CD14-positive monocyte (primary cell): ENCODE measurements at regions of chr6 and their contacts with region 1.

Region 1: DNA sequence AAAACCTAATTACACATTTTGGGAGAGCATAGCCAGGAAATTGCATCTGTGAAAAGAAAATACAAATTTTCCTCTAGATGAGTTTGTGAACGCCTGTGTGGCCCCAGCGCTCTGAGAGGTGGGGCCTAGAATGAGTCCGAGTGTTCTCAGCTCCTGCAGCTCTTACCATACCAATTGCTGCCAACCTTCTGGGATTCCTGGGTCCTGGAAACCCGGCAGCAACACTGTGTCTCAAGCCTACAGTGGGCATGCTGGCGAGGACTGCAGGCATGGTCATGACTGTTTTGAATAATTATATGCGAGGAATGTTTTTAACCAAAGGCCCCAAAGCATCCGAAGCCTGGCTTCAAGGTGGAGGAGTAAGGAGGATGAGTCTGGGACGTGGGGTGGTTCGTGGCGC is 90.4 kb downstream of the SERAC1 start:
- DNase-seq: no peak
- H3K4me3 ChIP-seq: no peak overlapping the region
- H3K4me3 Mint-ChIP-seq: no peak overlapping the region
- H3K27ac ChIP-seq: no peak overlapping the region
- H3K27ac Mint-ChIP-seq: no peak overlapping the region
- H3K4me1 ChIP-seq: peaks cover 29 to 32% of the 10 kb centered on the region in 2 donors
- H3K4me1 Mint-ChIP-seq: peaks cover 26% of the 10 kb centered on the region
- H3K27me3 ChIP-seq: no peaks in the 10 kb centered on the region
- H3K27me3 Mint-ChIP-seq: peaks cover 0 to 3% (median 0%) of the 10 kb centered on the region in 3 donors
- CTCF ChIP-seq: no peak

Region 2: DNA sequence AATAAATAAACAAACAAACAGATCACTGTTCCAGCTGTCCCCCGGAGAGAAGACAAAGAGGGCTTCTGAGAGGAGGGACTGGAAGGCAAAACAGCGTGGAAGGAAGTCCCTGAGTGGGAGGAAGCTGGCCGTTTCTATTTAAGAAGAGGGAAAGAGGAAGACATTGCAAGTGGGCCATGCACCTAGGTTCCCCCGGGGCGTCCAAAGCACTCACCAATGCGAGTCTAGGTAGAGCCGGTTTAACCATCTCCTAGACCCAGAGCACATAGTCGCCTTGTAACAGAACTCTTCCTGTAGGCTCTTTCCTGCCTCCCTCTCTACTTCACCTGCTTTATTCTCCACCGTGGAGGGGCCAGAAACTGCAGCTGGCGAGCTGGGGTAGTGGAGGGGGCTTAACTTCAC is 538.3 kb before region 1 on chr6:
- intact Hi-C with region 1: no loop called
- DNase-seq: peak in 2 of 3 donors; percentile 48 to 54
- H3K4me3 ChIP-seq: peak overlapping the region in 1 of 3 experiments; percentile 32
- H3K4me3 Mint-ChIP-seq: peak overlapping the region; percentile 47 to 48
- H3K27ac ChIP-seq: peak overlapping the region in 1 of 2 donors; percentile 55
- H3K27ac Mint-ChIP-seq: peak overlapping the region in 6 of 7 donors; percentile 26 to 87 (median 81)
- H3K4me1 ChIP-seq: peaks cover 52 to 55% of the 10 kb centered on the region in 2 donors
- H3K4me1 Mint-ChIP-seq: peaks cover 53% of the 10 kb centered on the region
- H3K27me3 ChIP-seq: no peaks in the 10 kb centered on the region
- H3K27me3 Mint-ChIP-seq: peaks cover 0 to 2% (median 2%) of the 10 kb centered on the region in 3 donors
- CTCF ChIP-seq: no peak

Region 3: DNA sequence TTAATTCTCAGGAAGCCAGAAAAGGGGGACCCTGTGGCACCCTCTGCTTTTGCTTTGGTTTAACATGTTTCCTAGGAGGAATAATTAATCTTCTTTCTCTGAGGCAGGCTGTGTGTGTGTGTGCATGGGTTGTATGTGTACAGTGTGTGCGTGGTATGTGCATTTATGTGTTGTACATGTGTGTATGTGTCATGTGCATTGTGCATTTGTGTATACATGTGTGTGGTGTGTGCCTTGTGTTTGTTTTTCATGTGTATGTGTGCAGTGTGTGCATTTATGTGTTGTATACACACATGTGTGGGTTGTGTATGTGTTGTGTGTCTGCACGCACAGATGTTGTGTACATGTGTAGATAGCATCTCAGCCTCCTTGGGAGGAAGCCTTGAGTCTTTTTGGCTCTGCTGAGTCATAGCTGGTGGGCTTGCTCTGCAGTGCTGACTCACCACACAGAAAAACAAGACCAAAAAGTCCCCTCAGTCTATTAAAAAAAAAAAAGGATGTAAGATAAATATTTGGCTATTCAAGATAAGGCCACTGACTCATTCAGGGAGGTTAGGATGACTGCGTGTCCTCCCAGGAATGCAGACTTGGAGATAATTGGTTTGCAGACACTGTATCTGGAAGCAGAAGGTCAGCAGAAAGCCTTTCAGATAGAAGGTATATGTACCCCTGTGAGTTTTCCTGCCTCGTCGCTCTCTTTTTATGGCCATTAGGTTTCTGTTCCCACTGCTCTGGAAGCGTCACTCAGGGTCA is 37.4 kb before region 1 on chr6:
- intact Hi-C with region 1: loop called in 1 of 2 experiments (anchors 5 kb)
- DNase-seq: peak; percentile 66 to 89 (median 67)
- H3K4me3 ChIP-seq: no peak overlapping the region
- H3K4me3 Mint-ChIP-seq: peak overlapping the region in 1 of 2 donors; percentile 3
- H3K27ac ChIP-seq: no peak overlapping the region
- H3K27ac Mint-ChIP-seq: peak overlapping the region in 5 of 7 donors; percentile 57 to 87 (median 63)
- H3K4me1 ChIP-seq: peaks cover 18 to 20% of the 10 kb centered on the region in 2 donors
- H3K4me1 Mint-ChIP-seq: peaks cover 16% of the 10 kb centered on the region
- H3K27me3 ChIP-seq: no peaks in the 10 kb centered on the region
- H3K27me3 Mint-ChIP-seq: peaks cover 4 to 10% (median 9%) of the 10 kb centered on the region in 3 donors
- CTCF ChIP-seq: no peak